K562 (cell line): ENCODE measurements at regions of chr16 and their contacts with region 1.

Region 1: GRCh38 chr16:89953671-89954419 is 5.3 kb downstream of the DEF8 start:
- DNase-seq: no peak
- ATAC-seq: no peak
- H3K4me3 ChIP-seq: no peak overlapping the region
- H3K27ac ChIP-seq: no peak overlapping the region
- H3K4me1 ChIP-seq: peaks cover 0 to 31% of the 10 kb centered on the region in 2 experiments; a peak in 3 of 5 replicates
- H3K27me3 ChIP-seq: no peaks in the 10 kb centered on the region
- CTCF ChIP-seq: no peak
- EP300 ChIP-seq: no peak
- POLR2A ChIP-seq: no peak
- RAD21 ChIP-seq: no peak

Region 2: GRCh38 chr16:89965447-89966225 is 11.8 kb after region 1 on chr16:
- CTCF ChIA-PET with region 1: no interaction called
- POLR2A ChIA-PET with region 1: interaction called, 11 read pairs
- in situ Hi-C with region 1: no loop called
- intact Hi-C with region 1: no loop called
- DNase-seq: no peak
- ATAC-seq: no peak
- H3K4me3 ChIP-seq: no peak overlapping the region
- H3K27ac ChIP-seq: no peak overlapping the region
- H3K4me1 ChIP-seq: peaks cover 6 to 32% of the 10 kb centered on the region in 2 experiments; a peak in 4 of 5 replicates
- H3K27me3 ChIP-seq: no peaks in the 10 kb centered on the region
- CTCF ChIP-seq: no peak
- EP300 ChIP-seq: no peak
- POLR2A ChIP-seq: no peak
- RAD21 ChIP-seq: no peak

Region 3: GRCh38 chr16:89972244-89973234 is 18.7 kb after region 1 on chr16:
- CTCF ChIA-PET with region 1: no interaction called
- POLR2A ChIA-PET with region 1: interaction called, 10 read pairs
- in situ Hi-C with region 1: no loop called
- intact Hi-C with region 1: no loop called
- DNase-seq: peak; percentile 96 to 100 (median 100)
- ATAC-seq: peak; percentile 91
- H3K4me3 ChIP-seq: peak overlapping the region; percentile 93
- H3K27ac ChIP-seq: peak overlapping the region; percentile 99
- H3K4me1 ChIP-seq: peaks cover 23 to 30% of the 10 kb centered on the region in 2 experiments; a peak in 4 of 5 replicates
- H3K27me3 ChIP-seq: no peaks in the 10 kb centered on the region
- CTCF ChIP-seq: peak in 1 of 3 experiments; percentile 26; a peak in 1 of 6 replicates
- EP300 ChIP-seq: no peak
- POLR2A ChIP-seq: peak; percentile 97
- RAD21 ChIP-seq: no peak

Region 4: DNA sequence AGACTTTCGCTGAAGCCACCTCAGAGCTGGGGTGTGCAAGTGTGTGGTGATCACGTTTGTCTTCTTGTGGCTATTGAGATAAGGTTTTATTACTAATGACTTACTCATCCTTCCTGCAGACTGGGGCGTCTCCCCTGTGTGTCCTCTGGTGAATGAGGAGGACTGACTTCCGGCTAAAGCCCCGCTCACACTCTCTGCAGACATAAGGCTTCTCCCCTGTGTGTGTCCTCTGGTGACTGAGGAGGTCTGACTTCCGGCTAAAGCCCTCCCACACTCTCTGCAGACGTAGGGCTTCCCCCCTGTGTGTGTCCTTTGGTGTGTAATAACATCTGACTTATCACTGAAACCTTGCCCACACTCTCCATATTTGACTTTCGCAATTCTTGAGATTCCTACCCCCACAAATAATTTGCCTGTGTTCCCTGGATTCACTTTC is 103.9 kb after region 1 on chr16:
- CTCF ChIA-PET with region 1: no interaction called
- POLR2A ChIA-PET with region 1: no interaction called
- in situ Hi-C with region 1: no loop called
- intact Hi-C with region 1: no loop called
- DNase-seq: peak; percentile 46 to 71 (median 54)
- ATAC-seq: peak; percentile 88
- H3K4me3 ChIP-seq: no peak overlapping the region
- H3K27ac ChIP-seq: peak overlapping the region; percentile 70
- H3K4me1 ChIP-seq: peaks cover 6 to 15% of the 10 kb centered on the region in 2 experiments; a peak in 4 of 5 replicates
- H3K27me3 ChIP-seq: no peaks in the 10 kb centered on the region
- CTCF ChIP-seq: no peak
- EP300 ChIP-seq: peak; percentile 44; the same call in 1 of the 2 replicates
- POLR2A ChIP-seq: no peak
- RAD21 ChIP-seq: no peak